ENCODE measurements at regions of chrX and their contacts with region 1.

Region 1: GRCh38 chrX:13653022-13653693 is at the start of gene TCEANC:
- DNase-seq: peak; percentile 92 to 96 (median 94)
- H3K4me3 ChIP-seq: peak within 1 kb of the TSS; percentile 42 to 83 (median 72)
- H3K4me3 Mint-ChIP-seq: peak within 1 kb of the TSS; percentile 85 to 90
- H3K27ac ChIP-seq: peak within 1 kb of the TSS; percentile 89 to 99
- H3K27ac Mint-ChIP-seq: peak within 1 kb of the TSS; percentile 88 to 97 (median 95)
- H3K4me1 ChIP-seq: peaks cover 12 to 21% of the 10 kb centered on the region in 2 donors
- H3K4me1 Mint-ChIP-seq: peaks cover 4% of the 10 kb centered on the region
- H3K27me3 ChIP-seq: no peaks in the 10 kb centered on the region
- H3K27me3 Mint-ChIP-seq: peaks cover 0 to 26% (median 1%) of the 10 kb centered on the region in 3 donors
- CTCF ChIP-seq: no peak
- polyA plus RNA-seq, gene TCEANC: 1.6 to 2.8 (median 1.9) TPM

Region 2: DNA sequence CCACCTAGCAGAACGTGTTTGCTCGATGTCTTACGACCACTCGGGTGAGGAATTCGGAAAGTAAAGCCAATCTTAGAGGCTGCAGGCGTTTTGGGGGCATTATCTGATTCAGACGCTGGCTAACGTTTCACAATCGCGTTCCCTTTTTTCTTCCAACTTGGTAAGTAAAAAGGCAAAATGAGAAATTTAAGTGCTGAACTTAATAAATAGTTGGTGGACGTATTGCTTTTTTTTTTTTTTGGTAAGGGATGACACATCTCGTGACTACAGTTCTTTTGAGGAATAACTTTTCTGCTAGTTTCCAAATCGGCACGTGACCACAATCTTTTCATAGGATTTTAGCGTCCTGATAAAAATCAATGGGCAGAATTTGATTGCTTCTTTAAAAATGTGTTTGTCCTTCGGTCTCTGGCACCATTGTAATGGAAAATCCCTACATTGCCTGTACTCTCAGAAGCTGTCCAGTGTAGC is 36.6 kb after region 1 on chrX:
- intact Hi-C with region 1: loop called in 1 of 2 experiments (anchors 5 kb)
- DNase-seq: peak; percentile 19 to 66 (median 47)
- H3K4me3 ChIP-seq: peak overlapping the region; percentile 75 to 91 (median 85)
- H3K4me3 Mint-ChIP-seq: peak overlapping the region; percentile 83 to 92
- H3K27ac ChIP-seq: peak overlapping the region; percentile 93 to 94
- H3K27ac Mint-ChIP-seq: peak overlapping the region; percentile 87 to 97 (median 94)
- H3K4me1 ChIP-seq: peaks cover 41 to 45% of the 10 kb centered on the region in 2 donors
- H3K4me1 Mint-ChIP-seq: peaks cover 45% of the 10 kb centered on the region
- H3K27me3 ChIP-seq: peaks cover 0 to 12% of the 10 kb centered on the region in 2 donors
- H3K27me3 Mint-ChIP-seq: peaks cover 0 to 37% (median 0%) of the 10 kb centered on the region in 3 donors
- CTCF ChIP-seq: no peak